Psoas muscle (tissue), 8 donors: ENCODE measurements at regions of chr1 and their contacts with region 1.

Region 1: GRCh38 chr1:42747125-42747524 is 7.1 kb upstream of the CLDN19 start:
- DNase-seq: peak in 1 of 2 donors; percentile 72
- ATAC-seq: peak; percentile 61 to 74 (median 65)
- H3K4me3 ChIP-seq: no peak overlapping the region
- H3K27ac ChIP-seq: no peak overlapping the region
- H3K4me1 ChIP-seq: no peaks in the 10 kb centered on the region
- H3K27me3 ChIP-seq: no peaks in the 10 kb centered on the region
- CTCF ChIP-seq: peak; percentile 50

Region 2: DNA sequence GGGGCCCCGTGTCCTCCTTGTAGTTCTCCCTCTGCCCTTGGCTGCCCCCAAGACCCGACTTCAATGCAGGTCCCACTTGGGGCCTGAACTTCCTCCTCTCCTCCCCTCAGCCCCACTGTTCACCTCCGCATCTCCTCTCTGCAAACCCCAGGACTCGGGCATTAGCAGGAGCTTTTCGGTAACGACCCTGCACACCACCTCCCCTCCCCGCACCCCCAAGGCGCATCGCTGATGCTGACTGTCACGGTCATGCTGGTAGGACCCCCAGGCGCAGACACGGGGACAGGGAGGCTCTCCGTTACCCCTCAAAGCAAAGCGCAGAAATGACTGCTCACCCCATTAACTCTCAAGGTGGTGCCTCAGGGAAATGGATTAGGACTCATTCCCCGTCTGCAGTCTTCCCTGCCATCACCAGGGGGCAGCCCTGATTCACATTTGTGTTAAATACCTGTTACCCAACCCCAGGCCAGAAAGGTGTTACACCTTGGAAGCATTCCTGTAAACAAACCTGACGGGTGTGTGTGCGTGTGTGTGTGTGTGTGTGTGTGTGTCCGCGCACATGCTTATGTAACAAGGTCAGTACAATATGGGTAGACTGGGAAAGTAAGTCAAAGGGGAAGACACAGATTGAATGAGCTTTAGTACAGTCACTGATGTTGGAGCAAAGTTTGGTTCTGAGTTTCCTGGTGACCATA is 600.4 kb before region 1 on chr1:
- intact Hi-C with region 1: loop called (anchors 5 to 10 kb)
- DNase-seq: peak; percentile 49 to 68
- ATAC-seq: peak; percentile 58 to 83 (median 70)
- H3K4me3 ChIP-seq: no peak overlapping the region
- H3K27ac ChIP-seq: no peak overlapping the region
- H3K4me1 ChIP-seq: no peaks in the 10 kb centered on the region
- H3K27me3 ChIP-seq: peaks cover 3 to 66% (median 16%) of the 10 kb centered on the region in 3 donors
- CTCF ChIP-seq: peak; percentile 74

Region 3: DNA sequence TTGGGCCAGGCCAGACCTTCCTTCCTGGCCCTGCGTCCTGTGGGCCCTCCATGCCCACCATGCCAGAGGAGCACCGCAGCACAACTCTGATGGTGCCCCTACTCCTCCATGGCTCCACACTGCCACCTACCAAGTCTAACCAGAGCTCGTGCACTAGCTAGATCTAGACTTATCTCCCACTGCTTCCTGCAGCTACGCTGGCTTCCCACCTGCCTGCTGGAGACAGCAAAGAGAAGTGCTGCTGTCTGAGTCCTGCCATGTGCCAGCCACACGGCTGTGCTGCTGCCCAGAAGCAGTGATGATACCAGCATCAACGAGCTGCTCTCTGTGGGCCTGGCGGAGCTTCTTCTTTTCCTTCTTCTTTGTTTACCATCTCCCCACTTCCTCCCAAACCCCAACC is 589.5 kb before region 1 on chr1:
- intact Hi-C with region 1: loop called in 1 of 2 experiments (anchors 10 kb)
- DNase-seq: no peak
- ATAC-seq: no peak
- H3K4me3 ChIP-seq: no peak overlapping the region
- H3K27ac ChIP-seq: no peak overlapping the region
- H3K4me1 ChIP-seq: no peaks in the 10 kb centered on the region
- H3K27me3 ChIP-seq: peaks cover 0 to 2% (median 0%) of the 10 kb centered on the region in 3 donors
- CTCF ChIP-seq: no peak

Region 4: DNA sequence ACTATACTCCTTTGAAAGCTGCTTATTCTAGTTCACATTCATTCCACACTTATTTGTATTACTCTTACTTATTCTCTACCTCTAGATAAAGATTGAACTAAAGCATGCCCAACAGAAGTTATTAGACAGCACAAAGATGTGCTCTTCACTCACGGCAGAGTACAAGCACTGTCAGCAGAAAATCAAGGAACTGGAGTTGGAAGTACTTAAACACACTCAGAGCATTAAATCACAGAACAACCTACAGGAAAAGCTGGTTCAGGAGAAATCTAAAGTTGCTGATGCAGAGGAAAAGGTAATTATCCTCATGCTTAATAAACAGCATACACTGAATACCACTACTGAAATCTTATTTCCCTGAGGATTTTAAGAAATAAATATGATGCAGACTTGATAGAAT is 170.2 kb before region 1 on chr1:
- intact Hi-C with region 1: loop called (anchors 2 to 5 kb)
- DNase-seq: no peak
- ATAC-seq: no peak
- H3K4me3 ChIP-seq: no peak overlapping the region
- H3K27ac ChIP-seq: no peak overlapping the region
- H3K4me1 ChIP-seq: no peaks in the 10 kb centered on the region
- H3K27me3 ChIP-seq: no peaks in the 10 kb centered on the region
- CTCF ChIP-seq: no peak